ENCODE measurements at regions of chr14 and their contacts with region 1.

Region 1: GRCh38 chr14:56339855-56340701 is 221.9 kb downstream of the PELI2 start:
- DNase-seq: peak; percentile 75
- H3K4me3 Mint-ChIP-seq: no peak overlapping the region
- H3K27ac Mint-ChIP-seq: no peak overlapping the region
- H3K4me1 Mint-ChIP-seq: no peaks in the 10 kb centered on the region
- H3K27me3 Mint-ChIP-seq: no peaks in the 10 kb centered on the region

Region 2: GRCh38 chr14:55438066-55438683 is 901.9 kb before region 1 on chr14:
- CTCF ChIA-PET with region 1: no interaction called
- intact Hi-C with region 1: loop called (anchors 2 kb)
- DNase-seq: peak; percentile 32
- H3K4me3 Mint-ChIP-seq: no peak overlapping the region
- H3K27ac Mint-ChIP-seq: no peak overlapping the region
- H3K4me1 Mint-ChIP-seq: peaks cover 21% of the 10 kb centered on the region
- H3K27me3 Mint-ChIP-seq: no peaks in the 10 kb centered on the region

Region 3: GRCh38 chr14:55707365-55707804 is 632.7 kb before region 1 on chr14:
- CTCF ChIA-PET with region 1: no interaction called
- intact Hi-C with region 1: loop called (anchors 2 kb)
- DNase-seq: no peak
- H3K4me3 Mint-ChIP-seq: no peak overlapping the region
- H3K27ac Mint-ChIP-seq: no peak overlapping the region
- H3K4me1 Mint-ChIP-seq: no peaks in the 10 kb centered on the region
- H3K27me3 Mint-ChIP-seq: no peaks in the 10 kb centered on the region

Region 4: DNA sequence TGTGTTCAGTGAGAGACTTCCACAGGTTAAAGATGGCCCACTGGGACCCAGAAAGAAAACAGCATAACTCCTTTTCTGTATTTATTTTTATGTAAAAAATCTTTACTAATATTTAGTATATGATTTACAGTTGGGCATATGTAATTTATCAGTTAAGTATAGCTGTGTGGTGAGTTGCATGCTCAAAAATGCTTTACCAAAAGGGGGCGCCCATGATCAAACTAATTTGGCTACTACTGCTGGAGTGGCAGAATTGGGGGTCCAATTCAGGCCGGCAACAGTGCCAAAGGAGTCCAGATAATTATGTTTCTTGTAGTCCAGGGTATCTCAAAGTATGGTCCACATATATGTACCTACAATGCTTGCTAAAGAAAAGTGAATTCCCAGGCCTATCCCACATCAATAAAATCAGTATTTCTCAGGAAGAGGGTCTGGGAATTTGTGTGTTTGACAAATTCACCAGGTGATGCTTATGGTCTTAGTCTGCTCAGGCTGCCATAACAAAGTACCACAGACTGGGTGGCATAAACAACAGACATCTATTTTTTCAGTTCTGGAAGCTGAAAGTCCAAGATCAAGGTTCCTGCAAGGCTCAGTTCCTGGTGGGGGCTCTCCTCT is 608.1 kb before region 1 on chr14:
- CTCF ChIA-PET with region 1: interaction called, 12 read pairs
- intact Hi-C with region 1: loop called (anchors 1 kb)
- DNase-seq: peak; percentile 77
- H3K4me3 Mint-ChIP-seq: no peak overlapping the region
- H3K27ac Mint-ChIP-seq: no peak overlapping the region
- H3K4me1 Mint-ChIP-seq: no peaks in the 10 kb centered on the region
- H3K27me3 Mint-ChIP-seq: no peaks in the 10 kb centered on the region

Region 5: DNA sequence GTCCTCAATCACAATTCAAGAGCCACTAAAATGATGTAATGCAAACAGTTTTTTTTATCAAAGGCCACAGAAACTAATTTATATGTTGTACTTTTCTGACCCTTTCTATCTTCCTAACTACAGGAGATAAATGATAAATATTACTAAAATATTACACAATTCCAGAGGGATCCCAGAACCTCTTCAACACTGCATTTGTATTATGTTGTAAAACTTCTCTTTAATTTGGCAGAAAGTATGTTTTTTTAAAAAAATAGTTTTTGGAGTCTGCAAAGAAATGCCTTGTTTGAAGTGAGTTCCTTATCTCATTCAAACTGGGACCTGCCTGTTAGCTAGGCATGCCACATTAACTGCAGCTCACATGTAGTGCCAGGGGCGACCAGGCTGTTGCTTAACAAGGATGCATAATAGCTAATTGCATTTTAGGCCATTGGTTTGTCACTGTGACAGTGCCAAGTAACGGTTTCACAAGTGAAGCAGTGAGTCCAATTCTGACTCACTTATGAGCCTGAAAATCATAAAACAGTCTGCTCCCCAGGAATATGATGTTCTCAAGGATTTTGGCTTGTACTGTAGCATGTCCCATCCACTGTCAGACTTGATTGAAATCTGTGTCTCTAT is 493.1 kb before region 1 on chr14:
- CTCF ChIA-PET with region 1: interaction called, 3 read pairs
- intact Hi-C with region 1: loop called (anchors 1 kb)
- DNase-seq: no peak
- H3K4me3 Mint-ChIP-seq: no peak overlapping the region
- H3K27ac Mint-ChIP-seq: no peak overlapping the region
- H3K4me1 Mint-ChIP-seq: peaks cover 8% of the 10 kb centered on the region
- H3K27me3 Mint-ChIP-seq: peaks cover 3% of the 10 kb centered on the region

Region 6: GRCh38 chr14:55864890-55865655 is 475.0 kb before region 1 on chr14:
- CTCF ChIA-PET with region 1: no interaction called
- intact Hi-C with region 1: loop called (anchors 5 kb)
- DNase-seq: no peak
- H3K4me3 Mint-ChIP-seq: no peak overlapping the region
- H3K27ac Mint-ChIP-seq: no peak overlapping the region
- H3K4me1 Mint-ChIP-seq: no peaks in the 10 kb centered on the region
- H3K27me3 Mint-ChIP-seq: peaks cover 8% of the 10 kb centered on the region

Region 7: DNA sequence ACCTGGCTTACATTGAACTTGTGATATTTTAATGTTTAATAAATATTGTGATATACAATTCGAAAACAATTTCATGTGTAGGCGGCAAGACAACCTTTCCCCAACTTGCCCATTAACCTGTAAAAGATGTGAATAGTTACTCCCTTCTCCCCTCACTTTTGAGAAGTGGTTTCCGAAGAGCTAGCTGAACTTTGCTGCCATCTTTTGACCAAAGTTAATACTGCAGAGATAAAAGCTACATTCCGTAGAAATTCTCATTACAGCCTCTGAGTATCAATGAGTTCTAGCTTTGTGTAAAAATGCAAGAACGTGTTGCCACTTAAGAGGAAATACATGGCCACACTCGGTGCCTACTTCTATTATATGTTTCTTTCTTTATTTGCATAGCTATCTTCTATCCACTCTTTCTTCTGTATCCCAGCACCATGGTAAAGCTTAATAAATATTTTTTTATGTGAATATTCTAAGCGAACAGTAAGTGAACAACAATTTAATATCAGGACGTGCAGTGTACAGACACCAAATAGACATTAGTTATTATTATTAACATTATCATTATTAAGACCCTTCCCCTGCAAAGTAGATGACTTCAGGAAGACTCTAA is 134.4 kb after region 1 on chr14:
- CTCF ChIA-PET with region 1: interaction called, 5 read pairs
- intact Hi-C with region 1: loop called (anchors 10 kb)
- DNase-seq: no peak
- H3K4me3 Mint-ChIP-seq: no peak overlapping the region
- H3K27ac Mint-ChIP-seq: no peak overlapping the region
- H3K4me1 Mint-ChIP-seq: no peaks in the 10 kb centered on the region
- H3K27me3 Mint-ChIP-seq: no peaks in the 10 kb centered on the region

Region 8: GRCh38 chr14:57139173-57139572 is 799.1 kb after region 1 on chr14:
- CTCF ChIA-PET with region 1: no interaction called
- intact Hi-C with region 1: no loop called
- DNase-seq: no peak
- H3K4me3 Mint-ChIP-seq: no peak overlapping the region
- H3K27ac Mint-ChIP-seq: no peak overlapping the region
- H3K4me1 Mint-ChIP-seq: no peaks in the 10 kb centered on the region
- H3K27me3 Mint-ChIP-seq: no peaks in the 10 kb centered on the region

Measured in activated naive CD4-positive, alpha-beta T cell treated with anti-CD3 and anti-CD28 coated beads for 36 hours (primary cell).